HEK293 (cell line): ENCODE measurements at regions of chr9 and their contacts with region 1.

Region 1: GRCh38 chr9:76419782-76420380 is 25.7 kb upstream of the RFK start:
- H3K4me3 ChIP-seq: no peak overlapping the region
- H3K27ac ChIP-seq: no peak overlapping the region
- H3K4me1 ChIP-seq: no peaks in the 10 kb centered on the region
- CTCF ChIP-seq: no peak

Region 2: DNA sequence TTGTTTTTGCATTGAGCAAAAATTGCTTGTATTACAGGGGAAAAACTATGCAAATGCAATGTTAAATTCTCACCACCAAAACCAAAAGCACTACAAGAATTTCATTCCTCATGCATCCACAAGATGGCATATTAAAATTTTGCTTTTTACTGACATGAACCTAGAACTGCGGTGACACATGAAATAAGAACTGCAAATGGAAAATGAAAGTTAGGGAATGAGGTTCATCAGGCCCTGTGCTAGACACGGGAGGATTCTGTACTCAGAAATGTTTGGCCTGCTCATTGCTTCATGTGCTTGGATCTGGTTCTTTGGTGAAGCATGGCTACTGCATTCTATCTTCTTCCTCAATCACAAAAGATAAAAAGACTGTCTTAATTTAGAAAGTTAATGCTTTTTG is 16.5 kb before region 1 on chr9:
- CTCF ChIA-PET with region 1: interaction called, 12 read pairs
- POLR2A ChIA-PET with region 1: no interaction called
- H3K4me3 ChIP-seq: no peak overlapping the region
- H3K27ac ChIP-seq: no peak overlapping the region
- H3K4me1 ChIP-seq: no peaks in the 10 kb centered on the region
- CTCF ChIP-seq: peak; percentile 21; the same call in 1 of the 2 replicates

Region 3: DNA sequence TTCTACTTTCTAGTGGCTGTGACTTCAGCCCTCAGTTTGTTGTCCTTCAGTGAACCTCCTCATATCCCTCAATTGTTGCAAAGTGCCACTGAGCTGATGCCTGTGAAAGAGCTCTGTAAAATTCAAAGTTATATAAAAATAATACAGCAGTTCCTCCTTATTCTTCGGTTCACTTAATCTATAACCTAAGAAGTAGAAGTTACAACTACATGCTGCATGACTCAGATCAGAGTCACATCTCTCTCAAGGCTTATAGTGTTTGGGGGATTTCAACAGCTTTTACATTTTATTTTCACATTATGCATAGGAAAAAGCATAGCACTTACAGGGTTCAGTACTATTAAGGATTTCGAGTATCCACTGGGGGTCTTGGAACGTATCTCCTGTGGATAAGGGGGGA is 14.0 kb after region 1 on chr9:
- CTCF ChIA-PET with region 1: interaction called, 21 read pairs
- POLR2A ChIA-PET with region 1: no interaction called
- H3K4me3 ChIP-seq: no peak overlapping the region
- H3K27ac ChIP-seq: no peak overlapping the region
- H3K4me1 ChIP-seq: no peaks in the 10 kb centered on the region
- CTCF ChIP-seq: no peak